ENCODE measurements at regions of chr1 and their contacts with region 1.

Region 1: GRCh38 chr1:51044834-51045233 is 57.2 kb upstream of the C1orf185 start:
- DNase-seq: no peak
- H3K4me3 ChIP-seq: no peak overlapping the region
- H3K27ac ChIP-seq: no peak overlapping the region
- H3K27me3 ChIP-seq: no peaks in the 10 kb centered on the region
- CTCF ChIP-seq: peak in 53 of 56 donors; percentile 22 to 80 (median 52)

Region 2: GRCh38 chr1:50774759-50775351 is 270.0 kb before region 1 on chr1:
- intact Hi-C with region 1: loop called (anchors 5 to 10 kb)
- DNase-seq: peak in 1 of 10 donors; percentile 26
- H3K4me3 ChIP-seq: no peak overlapping the region
- H3K27ac ChIP-seq: no peak overlapping the region
- H3K27me3 ChIP-seq: no peaks in the 10 kb centered on the region
- CTCF ChIP-seq: peak; percentile 64 to 99 (median 84)

Region 3: DNA sequence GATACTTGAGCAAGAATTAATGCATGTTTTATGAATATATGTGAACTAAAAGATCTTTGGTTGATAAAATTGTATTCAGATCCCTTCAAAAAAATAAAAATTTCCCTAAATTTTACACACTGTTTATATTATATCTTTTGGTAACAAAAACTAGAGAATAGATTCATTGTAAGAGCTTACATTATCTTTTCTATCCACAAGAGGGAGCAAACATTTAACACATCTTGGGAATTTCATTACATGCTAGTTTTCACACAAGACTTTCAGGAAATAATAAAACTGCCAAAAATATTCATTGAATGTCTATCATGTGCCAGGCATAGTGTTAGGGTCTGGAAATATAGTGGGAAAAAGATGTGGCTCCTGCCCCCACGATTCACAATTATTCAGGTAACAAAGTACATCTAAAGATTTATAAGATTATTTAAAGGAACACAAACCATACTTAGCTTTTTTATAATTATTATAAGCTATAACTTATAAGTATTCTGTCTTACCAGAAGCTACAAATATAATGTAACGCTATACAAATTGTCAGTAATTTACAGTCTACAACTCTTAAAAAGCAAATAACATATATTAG is 115.4 kb before region 1 on chr1:
- intact Hi-C with region 1: loop called in 1 of 2 experiments (anchors 10 kb)
- DNase-seq: no peak
- H3K4me3 ChIP-seq: no peak overlapping the region
- H3K27ac ChIP-seq: peak overlapping the region in 5 of 59 donors; percentile 3 to 57 (median 30)
- H3K27me3 ChIP-seq: no peaks in the 10 kb centered on the region
- CTCF ChIP-seq: peak in 55 of 56 donors; percentile 59 to 91 (median 70)

Region 4: DNA sequence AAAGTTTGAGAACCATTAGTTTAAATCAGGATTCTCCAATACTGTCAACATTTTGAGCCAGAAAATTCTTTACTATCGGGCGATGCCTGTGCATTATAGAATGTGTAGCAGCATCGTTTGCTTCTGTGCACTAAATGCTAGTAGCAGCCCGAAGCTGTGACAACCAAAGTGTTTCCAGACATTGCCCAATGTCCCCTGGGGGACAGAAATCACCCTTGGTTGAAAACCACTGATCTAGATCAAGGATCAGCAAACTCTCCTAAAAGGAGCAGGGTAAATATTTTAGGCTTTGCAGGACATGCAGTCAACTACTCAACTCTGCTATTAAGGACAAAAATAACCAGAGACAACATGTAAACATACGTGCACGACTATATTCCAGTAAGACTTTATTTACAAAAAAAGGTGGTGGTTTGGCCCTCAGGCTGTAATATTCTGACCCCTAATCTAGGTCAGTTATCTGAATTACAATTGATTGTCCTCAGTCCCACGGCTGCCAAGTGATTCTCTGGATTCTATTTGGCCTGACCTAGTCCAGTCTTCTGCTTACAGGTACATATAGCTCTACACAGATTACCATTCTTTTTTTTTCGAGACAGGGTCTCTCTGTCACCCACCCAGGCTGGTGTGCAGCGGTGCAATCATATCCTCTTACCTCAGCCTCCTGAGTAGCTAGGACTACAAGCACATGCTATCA is 95.4 kb before region 1 on chr1:
- intact Hi-C with region 1: loop called in 1 of 2 experiments (anchors 10 kb)
- DNase-seq: no peak
- H3K4me3 ChIP-seq: no peak overlapping the region
- H3K27ac ChIP-seq: no peak overlapping the region
- H3K27me3 ChIP-seq: no peaks in the 10 kb centered on the region
- CTCF ChIP-seq: no peak

Measured in dorsolateral prefrontal cortex (tissue), 120 donors.